ENCODE measurements at regions of chr13 and their contacts with region 1.

Region 1: GRCh38 chr13:74191410-74191809 is 57.2 kb upstream of the KLF12 start:
- DNase-seq: no peak
- ATAC-seq: no peak
- H3K4me3 ChIP-seq: no peak overlapping the region
- H3K4me3 Mint-ChIP-seq: no peak overlapping the region
- H3K27ac ChIP-seq: no peak overlapping the region
- H3K27ac Mint-ChIP-seq: no peak overlapping the region
- H3K4me1 ChIP-seq: peaks cover 9% of the 10 kb centered on the region
- H3K4me1 Mint-ChIP-seq: peaks cover 30% of the 10 kb centered on the region
- H3K27me3 ChIP-seq: no peaks in the 10 kb centered on the region
- H3K27me3 Mint-ChIP-seq: no peaks in the 10 kb centered on the region
- CTCF ChIP-seq: no peak

Region 2: DNA sequence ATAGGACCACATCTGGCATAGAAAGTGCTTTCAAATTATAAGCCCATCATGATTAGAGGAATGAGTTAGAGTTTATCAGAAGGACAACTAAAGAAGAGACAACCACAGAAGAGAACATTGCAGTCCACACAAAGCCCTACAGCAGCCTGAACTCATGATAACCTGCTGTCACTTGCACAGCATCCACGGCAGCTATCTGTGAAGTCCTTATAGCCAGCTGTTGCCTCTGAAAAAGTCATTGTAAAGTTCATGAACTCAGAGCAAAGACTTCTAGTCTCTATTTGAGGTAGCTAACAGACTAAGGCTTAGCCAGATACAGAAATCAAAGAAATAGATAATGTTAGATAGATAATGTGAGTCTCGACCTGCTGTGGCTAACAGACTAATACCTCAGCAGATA is 682.6 kb before region 1 on chr13:
- CTCF ChIA-PET with region 1: no interaction called
- POLR2A ChIA-PET with region 1: no interaction called
- intact Hi-C with region 1: no loop called
- DNase-seq: no peak
- ATAC-seq: no peak
- H3K4me3 ChIP-seq: no peak overlapping the region
- H3K4me3 Mint-ChIP-seq: no peak overlapping the region
- H3K27ac ChIP-seq: no peak overlapping the region
- H3K27ac Mint-ChIP-seq: no peak overlapping the region
- H3K4me1 ChIP-seq: no peaks in the 10 kb centered on the region
- H3K4me1 Mint-ChIP-seq: no peaks in the 10 kb centered on the region
- H3K27me3 ChIP-seq: no peaks in the 10 kb centered on the region
- H3K27me3 Mint-ChIP-seq: peaks cover 2% of the 10 kb centered on the region
- CTCF ChIP-seq: no peak

Region 3: GRCh38 chr13:74104661-74105275 is 86.6 kb before region 1 on chr13:
- CTCF ChIA-PET with region 1: no interaction called
- POLR2A ChIA-PET with region 1: no interaction called
- intact Hi-C with region 1: no loop called
- DNase-seq: no peak
- ATAC-seq: no peak
- H3K4me3 ChIP-seq: no peak overlapping the region
- H3K4me3 Mint-ChIP-seq: no peak overlapping the region
- H3K27ac ChIP-seq: no peak overlapping the region
- H3K27ac Mint-ChIP-seq: no peak overlapping the region
- H3K4me1 ChIP-seq: peaks cover 15% of the 10 kb centered on the region
- H3K4me1 Mint-ChIP-seq: peaks cover 75% of the 10 kb centered on the region
- H3K27me3 ChIP-seq: no peaks in the 10 kb centered on the region
- H3K27me3 Mint-ChIP-seq: no peaks in the 10 kb centered on the region
- CTCF ChIP-seq: no peak

Region 4: GRCh38 chr13:74158028-74158427 is 33.4 kb before region 1 on chr13:
- CTCF ChIA-PET with region 1: no interaction called
- POLR2A ChIA-PET with region 1: no interaction called
- intact Hi-C with region 1: loop called in 1 of 2 experiments (anchors 5 kb)
- DNase-seq: no peak
- ATAC-seq: no peak
- H3K4me3 ChIP-seq: no peak overlapping the region
- H3K4me3 Mint-ChIP-seq: no peak overlapping the region
- H3K27ac ChIP-seq: no peak overlapping the region
- H3K27ac Mint-ChIP-seq: no peak overlapping the region
- H3K4me1 ChIP-seq: no peaks in the 10 kb centered on the region
- H3K4me1 Mint-ChIP-seq: no peaks in the 10 kb centered on the region
- H3K27me3 ChIP-seq: no peaks in the 10 kb centered on the region
- H3K27me3 Mint-ChIP-seq: peaks cover 2% of the 10 kb centered on the region
- CTCF ChIP-seq: no peak

Region 5: DNA sequence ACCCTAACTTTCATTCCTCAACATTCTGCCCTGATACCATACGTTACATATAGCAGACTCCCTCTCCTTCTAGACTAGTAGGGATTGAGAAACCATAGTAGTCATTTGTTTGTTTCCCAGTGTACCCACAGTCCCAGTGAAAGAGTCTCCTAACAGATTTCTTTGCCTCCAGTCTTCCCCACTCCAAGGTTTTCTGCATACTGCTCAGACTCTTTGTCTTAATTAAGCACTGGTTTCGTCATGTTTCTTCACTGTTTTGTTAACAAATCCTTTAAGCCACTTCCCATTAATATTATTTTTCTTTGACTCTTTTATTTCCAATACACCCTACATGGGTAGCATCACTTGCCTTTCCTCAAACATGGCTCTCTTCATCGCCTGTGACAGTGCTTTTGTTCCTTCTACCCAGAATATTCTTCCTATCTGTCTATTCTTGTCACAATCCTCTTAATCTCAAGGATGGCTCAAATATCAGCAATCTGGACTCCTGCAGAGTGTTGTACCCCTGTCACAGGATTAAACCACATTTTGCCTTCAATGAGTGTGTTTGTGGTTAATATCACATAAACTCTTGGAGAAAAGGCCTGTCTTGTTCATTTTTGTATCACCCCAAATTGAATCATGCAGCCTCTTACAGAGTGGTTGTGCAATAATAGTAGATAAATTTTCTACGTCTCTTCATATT is 35.5 kb after region 1 on chr13:
- CTCF ChIA-PET with region 1: no interaction called
- POLR2A ChIA-PET with region 1: interaction called, 6 read pairs
- intact Hi-C with region 1: loop called in 1 of 2 experiments (anchors 5 kb)
- DNase-seq: no peak
- ATAC-seq: no peak
- H3K4me3 ChIP-seq: no peak overlapping the region
- H3K4me3 Mint-ChIP-seq: no peak overlapping the region
- H3K27ac ChIP-seq: no peak overlapping the region
- H3K27ac Mint-ChIP-seq: no peak overlapping the region
- H3K4me1 ChIP-seq: peaks cover 13% of the 10 kb centered on the region
- H3K4me1 Mint-ChIP-seq: peaks cover 24% of the 10 kb centered on the region
- H3K27me3 ChIP-seq: no peaks in the 10 kb centered on the region
- H3K27me3 Mint-ChIP-seq: no peaks in the 10 kb centered on the region
- CTCF ChIP-seq: no peak